ENCODE measurements at regions of chr10 and their contacts with region 1.

Region 1: DNA sequence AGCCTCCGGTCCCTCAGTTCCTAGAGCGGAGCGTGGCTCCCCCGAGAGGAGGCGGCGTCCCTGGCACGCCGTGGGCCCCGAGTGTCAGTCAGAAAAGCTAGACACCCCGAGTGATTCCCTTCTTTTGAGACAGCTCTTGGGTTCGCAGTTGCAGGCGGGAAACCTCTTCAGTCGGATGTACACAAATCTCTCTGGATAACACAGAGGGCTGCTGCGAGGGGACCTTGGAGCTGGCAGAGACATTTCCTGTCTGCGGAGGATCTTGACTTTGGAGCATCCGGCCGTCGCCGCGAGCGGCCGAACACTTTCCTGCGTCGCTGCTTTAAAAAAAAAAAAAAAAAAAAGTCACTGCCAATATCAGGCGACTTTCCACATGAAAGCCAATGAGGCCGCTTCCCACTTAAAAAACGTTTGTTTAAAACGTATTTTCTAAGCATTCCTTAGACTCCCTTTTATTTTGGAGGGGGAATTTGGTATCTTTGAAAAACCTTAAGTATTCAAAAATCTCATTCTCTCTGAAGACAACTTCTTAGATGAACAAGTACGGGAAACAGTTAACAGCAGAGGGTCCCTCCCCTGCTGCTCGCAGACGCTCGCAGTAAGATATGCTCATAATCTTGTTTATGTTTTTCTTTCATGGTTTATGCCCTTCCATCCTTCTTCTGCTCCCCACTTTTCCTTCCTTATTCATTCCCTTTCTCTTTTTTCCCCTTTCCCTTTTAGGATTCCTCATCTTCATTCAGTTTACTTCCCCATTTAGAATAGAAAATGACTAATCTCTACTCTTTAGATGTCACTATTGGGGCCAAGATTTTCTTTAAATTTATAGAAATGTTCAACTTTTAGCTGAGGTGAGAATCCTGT is 10.0 kb downstream of the HHEX start:
- DNase-seq: peak; percentile 91
- H3K4me3 ChIP-seq: peak overlapping the region; percentile 49 to 59 (median 52)
- H3K27ac ChIP-seq: peak overlapping the region; percentile 54 to 69 (median 64)
- H3K4me1 ChIP-seq: peaks cover 11 to 26% (median 23%) of the 10 kb centered on the region in 4 donors
- H3K27me3 ChIP-seq: peaks cover 0 to 18% (median 0%) of the 10 kb centered on the region in 4 donors
- CTCF ChIP-seq: no peak
- EP300 ChIP-seq: no peak
- POLR2A ChIP-seq: no peak

Region 2: DNA sequence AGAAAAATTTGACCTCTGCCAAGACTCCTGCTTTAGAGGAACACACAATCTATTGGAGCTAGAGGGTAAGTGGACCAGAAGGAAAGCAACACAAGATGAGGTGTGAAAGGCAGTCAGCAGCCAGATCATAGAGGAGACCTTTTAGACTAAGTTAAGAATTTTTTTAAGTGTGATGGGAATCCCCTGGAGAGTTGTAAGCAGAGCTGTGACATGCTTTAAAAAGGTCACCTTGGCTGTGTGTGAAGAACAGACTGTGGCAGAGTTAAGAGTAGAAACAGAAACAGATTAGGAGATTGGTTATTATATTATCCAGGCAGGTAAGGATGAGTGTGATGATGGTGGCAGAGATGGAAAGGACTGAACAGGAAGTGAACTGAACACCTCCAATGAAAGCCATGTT is 432.4 kb before region 1 on chr10:
- intact Hi-C with region 1: no loop called
- DNase-seq: no peak
- H3K4me3 ChIP-seq: no peak overlapping the region
- H3K27ac ChIP-seq: peak overlapping the region; percentile 37 to 66 (median 52)
- H3K4me1 ChIP-seq: peaks cover 6 to 24% (median 21%) of the 10 kb centered on the region in 4 donors
- H3K27me3 ChIP-seq: no peaks in the 10 kb centered on the region
- CTCF ChIP-seq: no peak
- EP300 ChIP-seq: no peak
- POLR2A ChIP-seq: no peak

Region 3: DNA sequence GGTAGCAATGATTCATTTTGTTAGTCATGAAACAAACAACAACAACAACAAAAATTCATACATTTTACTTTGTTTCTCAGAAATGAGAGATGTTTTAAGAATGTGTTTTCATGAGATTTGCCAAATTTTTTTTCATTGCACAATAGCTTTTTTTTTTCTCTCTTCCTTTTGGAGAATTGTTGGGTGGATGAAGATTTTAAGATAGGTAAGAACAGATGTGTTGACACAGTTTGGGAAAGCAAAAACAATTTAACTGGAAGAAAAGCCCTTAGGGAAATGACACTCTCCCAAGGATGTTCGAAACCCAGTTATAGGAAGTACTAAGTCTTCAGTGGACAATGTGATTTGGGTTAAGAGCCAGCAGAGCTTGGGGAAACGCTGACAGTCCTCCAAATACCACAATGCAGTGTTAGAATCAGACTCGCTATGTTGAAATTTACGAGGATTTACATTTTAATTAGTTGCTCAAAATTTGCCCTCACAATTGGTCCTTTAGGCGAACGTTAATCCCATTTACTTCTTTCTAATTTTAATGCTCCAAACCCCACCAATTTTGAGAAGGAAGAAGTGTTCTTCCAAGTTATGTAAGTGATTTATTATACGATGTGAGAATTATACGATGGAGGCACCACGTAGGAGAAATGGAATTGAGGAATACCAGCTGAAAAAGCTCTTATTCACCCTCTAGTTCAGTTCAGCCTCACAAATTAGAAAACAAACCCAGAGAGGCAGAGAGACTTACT is 51.2 kb after region 1 on chr10:
- intact Hi-C with region 1: loop called (anchors 5 kb)
- DNase-seq: no peak
- H3K4me3 ChIP-seq: no peak overlapping the region
- H3K27ac ChIP-seq: no peak overlapping the region
- H3K4me1 ChIP-seq: peaks cover 0 to 5% (median 2%) of the 10 kb centered on the region in 4 donors
- H3K27me3 ChIP-seq: no peaks in the 10 kb centered on the region
- CTCF ChIP-seq: no peak
- EP300 ChIP-seq: no peak
- POLR2A ChIP-seq: no peak

Measured in esophagus muscularis mucosa (tissue), 4 donors.